ENCODE measurements at regions of chr4 and their contacts with region 1.

Region 1: DNA sequence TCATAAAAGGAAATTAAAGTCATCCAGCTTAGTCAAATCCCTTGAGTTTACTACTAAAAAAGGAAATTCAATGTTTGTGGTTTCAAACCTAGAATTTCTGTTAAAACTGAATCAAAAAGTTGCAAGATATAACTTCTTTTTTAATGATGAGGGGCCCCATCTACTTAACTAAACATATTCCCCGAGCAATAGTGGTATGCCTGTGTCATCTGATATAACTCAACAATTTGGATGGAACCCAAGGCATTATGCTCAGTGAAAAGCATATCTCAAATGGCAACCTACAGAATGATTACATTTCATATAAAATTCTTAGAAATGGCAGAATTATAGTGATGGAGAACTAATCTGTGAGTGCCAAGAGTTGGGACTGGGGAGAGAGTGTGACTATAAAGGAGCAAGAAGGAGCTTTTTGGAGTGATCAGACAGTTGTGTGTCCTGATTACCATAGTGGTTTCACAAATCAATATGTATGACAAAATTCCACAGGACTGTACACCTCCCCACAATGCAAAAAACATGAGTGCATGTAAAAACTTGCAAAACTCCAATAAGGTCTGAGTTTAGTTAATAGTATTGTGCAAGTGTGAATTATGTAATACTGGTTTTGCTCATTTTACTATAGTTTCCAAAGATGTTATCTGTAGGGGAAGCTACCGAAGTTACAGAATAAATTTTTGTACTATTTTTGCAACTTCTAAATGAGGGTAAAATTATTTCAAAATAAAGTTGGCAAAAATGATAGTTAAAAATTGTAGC is 323.2 kb downstream of the ARHGAP24 start:
- H3K4me3 ChIP-seq: no peak overlapping the region
- H3K27ac ChIP-seq: no peak overlapping the region
- H3K4me1 ChIP-seq: no peaks in the 10 kb centered on the region
- CTCF ChIP-seq: no peak

Region 2: DNA sequence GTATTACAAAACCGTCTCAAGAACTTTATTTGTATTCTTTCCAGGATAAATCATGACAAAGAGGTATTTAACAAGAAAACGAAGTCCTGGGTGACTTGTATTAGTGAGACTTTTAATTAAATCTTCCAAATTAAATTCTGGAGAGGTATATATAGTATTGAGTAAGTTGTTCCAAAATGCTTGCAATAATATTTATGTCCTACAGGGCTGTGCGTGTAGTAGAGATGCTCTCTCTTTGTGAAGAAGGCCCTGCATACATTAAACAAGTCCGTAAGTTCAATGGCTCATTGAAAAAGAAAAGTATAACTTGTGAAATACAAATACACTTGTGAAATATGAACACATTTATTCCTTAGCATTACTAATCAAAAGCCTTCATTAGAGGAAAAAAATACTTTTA is 111.8 kb before region 1 on chr4:
- CTCF ChIA-PET with region 1: no interaction called
- POLR2A ChIA-PET with region 1: no interaction called
- H3K4me3 ChIP-seq: no peak overlapping the region
- H3K27ac ChIP-seq: no peak overlapping the region
- H3K4me1 ChIP-seq: no peaks in the 10 kb centered on the region
- CTCF ChIP-seq: no peak

Region 3: DNA sequence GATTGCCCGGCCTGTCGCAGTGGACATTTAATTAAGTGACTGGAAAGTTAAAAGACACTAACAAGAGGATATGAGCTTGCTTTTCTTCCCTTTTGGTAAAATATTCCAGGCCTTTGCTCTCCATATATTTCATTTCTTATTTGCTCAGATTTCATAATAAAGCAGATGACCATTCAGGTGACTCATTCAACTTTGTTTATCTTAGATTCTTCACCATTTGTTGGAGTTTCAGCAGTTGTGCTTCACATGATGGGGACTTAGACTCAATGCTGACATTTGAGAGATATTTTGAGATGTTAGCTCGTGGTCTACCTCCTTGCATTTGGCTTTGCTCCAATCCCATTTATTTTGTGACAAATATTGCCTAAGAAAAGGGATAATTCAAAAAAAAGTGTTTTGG is 11.1 kb before region 1 on chr4:
- CTCF ChIA-PET with region 1: interaction called, 12 read pairs
- POLR2A ChIA-PET with region 1: no interaction called
- H3K4me3 ChIP-seq: no peak overlapping the region
- H3K27ac ChIP-seq: no peak overlapping the region
- H3K4me1 ChIP-seq: no peaks in the 10 kb centered on the region
- CTCF ChIP-seq: no peak

Region 4: GRCh38 chr4:85938062-85938461 is 139.9 kb after region 1 on chr4:
- CTCF ChIA-PET with region 1: interaction called, 11 read pairs
- POLR2A ChIA-PET with region 1: no interaction called
- H3K4me3 ChIP-seq: no peak overlapping the region
- H3K27ac ChIP-seq: no peak overlapping the region
- H3K4me1 ChIP-seq: no peaks in the 10 kb centered on the region
- CTCF ChIP-seq: no peak

Region 5: DNA sequence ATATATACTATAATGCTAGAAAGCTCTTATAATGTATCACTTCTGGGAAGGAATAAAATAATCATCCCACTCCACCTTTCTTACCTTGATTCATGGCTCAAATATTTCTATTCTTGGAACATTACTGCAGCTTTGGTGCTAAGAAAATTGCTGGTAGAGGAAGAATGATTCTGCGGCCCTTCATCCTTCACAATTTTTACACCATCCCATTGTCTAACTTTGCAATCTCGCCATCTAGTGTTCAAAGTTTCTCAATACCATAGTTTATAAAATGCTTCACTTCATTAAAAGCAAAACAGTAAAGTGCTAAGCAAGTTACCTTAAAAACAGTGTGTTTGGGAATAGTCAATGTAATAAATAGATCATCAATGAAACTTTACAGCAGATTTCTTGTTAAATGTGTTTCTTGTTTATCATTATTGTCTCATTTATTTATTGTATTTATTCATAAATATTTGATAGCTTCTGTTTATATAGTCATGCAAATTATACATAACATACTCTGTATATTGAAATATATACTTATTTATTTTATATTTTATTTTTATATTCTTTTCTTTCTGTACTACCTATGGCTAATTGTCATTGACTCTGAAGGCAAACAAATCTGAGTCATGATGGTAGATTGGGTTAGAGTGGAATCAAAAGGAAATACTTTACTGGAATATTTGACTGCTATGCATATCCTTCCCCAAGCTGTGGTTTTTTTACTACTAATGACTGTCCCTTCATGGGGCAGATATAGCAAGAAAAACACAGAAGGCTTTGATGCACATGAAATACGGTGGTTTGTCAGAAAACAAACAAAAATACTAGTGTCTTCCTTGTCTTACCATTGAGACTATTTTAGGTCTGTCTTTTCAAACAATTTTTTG is 171.0 kb after region 1 on chr4:
- CTCF ChIA-PET with region 1: interaction called, 32 read pairs
- POLR2A ChIA-PET with region 1: no interaction called
- H3K4me3 ChIP-seq: no peak overlapping the region
- H3K27ac ChIP-seq: no peak overlapping the region
- H3K4me1 ChIP-seq: no peaks in the 10 kb centered on the region
- CTCF ChIP-seq: no peak